Heart right ventricle (tissue), 16 donors: ENCODE measurements at regions of chr14 and their contacts with region 1.

Region 1: GRCh38 chr14:59067127-59067894 is 121.2 kb upstream of the DAAM1 start:
- DNase-seq: no peak
- ATAC-seq: no peak
- H3K4me3 ChIP-seq: no peak overlapping the region
- H3K27ac ChIP-seq: no peak overlapping the region
- H3K4me1 ChIP-seq: no peaks in the 10 kb centered on the region
- H3K27me3 ChIP-seq: peaks cover 0 to 5% (median 0%) of the 10 kb centered on the region in 7 donors
- CTCF ChIP-seq: no peak

Region 2: GRCh38 chr14:57352396-57353170 is 1714.7 kb before region 1 on chr14:
- intact Hi-C with region 1: no loop called
- DNase-seq: no peak
- ATAC-seq: no peak
- H3K4me3 ChIP-seq: no peak overlapping the region
- H3K27ac ChIP-seq: no peak overlapping the region
- H3K4me1 ChIP-seq: no peaks in the 10 kb centered on the region
- H3K27me3 ChIP-seq: peaks cover 0 to under 1% (median 0%) of the 10 kb centered on the region in 7 donors
- CTCF ChIP-seq: no peak

Region 3: GRCh38 chr14:59028476-59029202 is 38.7 kb before region 1 on chr14:
- intact Hi-C with region 1: no loop called
- DNase-seq: peak; percentile 25 to 41
- ATAC-seq: peak in 7 of 8 donors; percentile 58 to 81 (median 74)
- H3K4me3 ChIP-seq: no peak overlapping the region
- H3K27ac ChIP-seq: no peak overlapping the region
- H3K4me1 ChIP-seq: peaks cover 0 to 9% (median 0%) of the 10 kb centered on the region in 9 donors
- H3K27me3 ChIP-seq: no peaks in the 10 kb centered on the region
- CTCF ChIP-seq: peak; percentile 41 to 83 (median 77)

Region 4: DNA sequence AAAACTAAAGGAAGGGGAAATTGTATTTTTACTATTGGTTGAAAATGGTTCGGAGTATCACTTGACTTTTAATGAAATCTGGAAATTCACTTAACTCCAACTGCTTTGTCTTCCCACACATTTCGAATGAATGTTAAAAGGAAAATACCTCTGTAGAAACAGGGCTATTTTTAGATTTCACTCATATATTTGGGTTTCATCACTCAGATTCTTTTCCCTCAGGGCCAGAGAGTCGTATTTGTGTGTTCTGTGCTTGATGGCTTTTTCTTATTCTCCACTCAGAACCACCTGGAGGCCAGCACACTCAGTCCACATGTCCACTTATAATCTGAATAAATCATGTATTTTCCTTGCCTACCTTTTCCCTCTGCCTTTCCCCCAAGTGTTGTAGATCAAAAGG is 161.1 kb after region 1 on chr14:
- intact Hi-C with region 1: no loop called
- DNase-seq: no peak
- ATAC-seq: peak in 1 of 8 donors; percentile 31
- H3K4me3 ChIP-seq: no peak overlapping the region
- H3K27ac ChIP-seq: peak overlapping the region in 5 of 10 donors; percentile 10 to 72 (median 66)
- H3K4me1 ChIP-seq: peaks cover 5 to 88% (median 74%) of the 10 kb centered on the region in 9 donors
- H3K27me3 ChIP-seq: no peaks in the 10 kb centered on the region
- CTCF ChIP-seq: no peak

Region 5: GRCh38 chr14:59275653-59276052 is 208.3 kb after region 1 on chr14:
- intact Hi-C with region 1: no loop called
- DNase-seq: no peak
- ATAC-seq: peak in 7 of 8 donors; percentile 49 to 78 (median 68)
- H3K4me3 ChIP-seq: no peak overlapping the region
- H3K27ac ChIP-seq: peak overlapping the region in 8 of 10 donors; percentile 4 to 71 (median 44)
- H3K4me1 ChIP-seq: peaks cover 2 to 64% (median 42%) of the 10 kb centered on the region in 9 donors
- H3K27me3 ChIP-seq: no peaks in the 10 kb centered on the region
- CTCF ChIP-seq: no peak

Region 6: GRCh38 chr14:59849411-59850130 is 782.3 kb after region 1 on chr14:
- intact Hi-C with region 1: loop called in 1 of 10 experiments (anchors 10 kb)
- DNase-seq: peak in 1 of 2 donors; percentile 16
- ATAC-seq: peak in 6 of 8 donors; percentile 43 to 69 (median 66)
- H3K4me3 ChIP-seq: no peak overlapping the region
- H3K27ac ChIP-seq: peak overlapping the region in 1 of 10 donors; percentile 43
- H3K4me1 ChIP-seq: no peaks in the 10 kb centered on the region
- H3K27me3 ChIP-seq: peaks cover 0 to 4% (median 0%) of the 10 kb centered on the region in 7 donors
- CTCF ChIP-seq: no peak